ENCODE measurements at regions of chr15 and their contacts with region 1.

Region 1: GRCh38 chr15:48285329-48286214 is 45.7 kb upstream of the DUT start:
- DNase-seq: peak; percentile 66
- H3K4me3 Mint-ChIP-seq: no peak overlapping the region
- H3K27ac Mint-ChIP-seq: no peak overlapping the region
- H3K4me1 Mint-ChIP-seq: peaks cover 7% of the 10 kb centered on the region
- H3K27me3 Mint-ChIP-seq: peaks cover 1% of the 10 kb centered on the region

Region 2: GRCh38 chr15:46312133-46312740 is 1973.3 kb before region 1 on chr15:
- CTCF ChIA-PET with region 1: no interaction called
- intact Hi-C with region 1: loop called (anchors 5 kb)
- DNase-seq: peak; percentile 78
- H3K4me3 Mint-ChIP-seq: no peak overlapping the region
- H3K27ac Mint-ChIP-seq: no peak overlapping the region
- H3K4me1 Mint-ChIP-seq: no peaks in the 10 kb centered on the region
- H3K27me3 Mint-ChIP-seq: no peaks in the 10 kb centered on the region

Region 3: DNA sequence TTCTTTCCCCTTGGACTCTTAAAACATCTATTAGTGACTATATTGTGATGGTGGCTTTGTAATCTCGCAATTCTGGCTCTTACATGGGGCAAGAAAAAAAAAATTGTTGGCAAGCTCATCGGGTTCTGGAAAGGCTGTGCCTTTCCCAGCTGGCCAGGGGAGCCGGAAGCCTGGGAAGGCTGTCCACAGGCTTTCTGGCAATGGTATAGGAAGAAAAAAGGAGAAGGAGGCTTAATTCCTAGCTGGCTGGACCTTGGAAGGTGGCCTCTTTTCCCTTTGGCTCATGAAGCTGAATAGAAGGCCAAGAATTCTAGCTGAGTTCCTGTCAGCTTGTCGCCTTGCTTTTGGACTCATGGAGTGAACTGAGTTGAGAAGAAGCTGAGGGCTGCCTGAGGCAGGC is 811.7 kb before region 1 on chr15:
- CTCF ChIA-PET with region 1: no interaction called
- intact Hi-C with region 1: loop called (anchors 10 kb)
- DNase-seq: no peak
- H3K4me3 Mint-ChIP-seq: no peak overlapping the region
- H3K27ac Mint-ChIP-seq: no peak overlapping the region
- H3K4me1 Mint-ChIP-seq: no peaks in the 10 kb centered on the region
- H3K27me3 Mint-ChIP-seq: peaks cover 1% of the 10 kb centered on the region

Region 4: GRCh38 chr15:48010316-48010715 is 275.3 kb before region 1 on chr15:
- CTCF ChIA-PET with region 1: no interaction called
- intact Hi-C with region 1: no loop called
- DNase-seq: no peak
- H3K4me3 Mint-ChIP-seq: no peak overlapping the region
- H3K27ac Mint-ChIP-seq: no peak overlapping the region
- H3K4me1 Mint-ChIP-seq: no peaks in the 10 kb centered on the region
- H3K27me3 Mint-ChIP-seq: no peaks in the 10 kb centered on the region

Region 5: GRCh38 chr15:48112242-48112641 is 173.3 kb before region 1 on chr15:
- CTCF ChIA-PET with region 1: interaction called, 8 read pairs
- intact Hi-C with region 1: loop called (anchors 5 kb)
- DNase-seq: peak; percentile 17
- H3K4me3 Mint-ChIP-seq: no peak overlapping the region
- H3K27ac Mint-ChIP-seq: no peak overlapping the region
- H3K4me1 Mint-ChIP-seq: no peaks in the 10 kb centered on the region
- H3K27me3 Mint-ChIP-seq: peaks cover 23% of the 10 kb centered on the region

Region 6: GRCh38 chr15:48352474-48353072 is 67.0 kb after region 1 on chr15:
- CTCF ChIA-PET with region 1: interaction called, 8 read pairs
- intact Hi-C with region 1: loop called (anchors 2 kb)
- DNase-seq: peak; percentile 68
- H3K4me3 Mint-ChIP-seq: no peak overlapping the region
- H3K27ac Mint-ChIP-seq: no peak overlapping the region
- H3K4me1 Mint-ChIP-seq: peaks cover 2% of the 10 kb centered on the region
- H3K27me3 Mint-ChIP-seq: no peaks in the 10 kb centered on the region

Measured in activated naive CD4-positive, alpha-beta T cell treated with anti-CD3 and anti-CD28 coated beads for 36 hours (primary cell).